ENCODE measurements at regions of chr1 and their contacts with region 1.

Region 1: GRCh38 chr1:28329395-28330153 is 734 bp downstream of the MED18 start:
- DNase-seq: peak; percentile 56 to 78
- ATAC-seq: peak; percentile 26
- H3K4me3 ChIP-seq: peak overlapping the region; percentile 57 to 91
- H3K27ac ChIP-seq: peak overlapping the region in 1 of 2 donors; percentile 32
- H3K4me1 ChIP-seq: peaks cover 0 to 3% of the 10 kb centered on the region in 2 donors
- H3K27me3 ChIP-seq: no peaks in the 10 kb centered on the region

Region 2: GRCh38 chr1:28115267-28115666 is 214.3 kb before region 1 on chr1:
- intact Hi-C with region 1: no loop called
- DNase-seq: peak in 1 of 2 donors; percentile 53
- ATAC-seq: no peak
- H3K4me3 ChIP-seq: no peak overlapping the region
- H3K27ac ChIP-seq: no peak overlapping the region
- H3K4me1 ChIP-seq: no peaks in the 10 kb centered on the region
- H3K27me3 ChIP-seq: no peaks in the 10 kb centered on the region

Region 3: GRCh38 chr1:28248283-28249012 is 81.1 kb before region 1 on chr1:
- intact Hi-C with region 1: loop called in 1 of 2 experiments (anchors 1 kb)
- DNase-seq: peak; percentile 85 to 92
- ATAC-seq: peak; percentile 89
- H3K4me3 ChIP-seq: no peak overlapping the region
- H3K27ac ChIP-seq: peak overlapping the region in 1 of 2 donors; percentile 86
- H3K4me1 ChIP-seq: no peaks in the 10 kb centered on the region
- H3K27me3 ChIP-seq: no peaks in the 10 kb centered on the region

Region 4: DNA sequence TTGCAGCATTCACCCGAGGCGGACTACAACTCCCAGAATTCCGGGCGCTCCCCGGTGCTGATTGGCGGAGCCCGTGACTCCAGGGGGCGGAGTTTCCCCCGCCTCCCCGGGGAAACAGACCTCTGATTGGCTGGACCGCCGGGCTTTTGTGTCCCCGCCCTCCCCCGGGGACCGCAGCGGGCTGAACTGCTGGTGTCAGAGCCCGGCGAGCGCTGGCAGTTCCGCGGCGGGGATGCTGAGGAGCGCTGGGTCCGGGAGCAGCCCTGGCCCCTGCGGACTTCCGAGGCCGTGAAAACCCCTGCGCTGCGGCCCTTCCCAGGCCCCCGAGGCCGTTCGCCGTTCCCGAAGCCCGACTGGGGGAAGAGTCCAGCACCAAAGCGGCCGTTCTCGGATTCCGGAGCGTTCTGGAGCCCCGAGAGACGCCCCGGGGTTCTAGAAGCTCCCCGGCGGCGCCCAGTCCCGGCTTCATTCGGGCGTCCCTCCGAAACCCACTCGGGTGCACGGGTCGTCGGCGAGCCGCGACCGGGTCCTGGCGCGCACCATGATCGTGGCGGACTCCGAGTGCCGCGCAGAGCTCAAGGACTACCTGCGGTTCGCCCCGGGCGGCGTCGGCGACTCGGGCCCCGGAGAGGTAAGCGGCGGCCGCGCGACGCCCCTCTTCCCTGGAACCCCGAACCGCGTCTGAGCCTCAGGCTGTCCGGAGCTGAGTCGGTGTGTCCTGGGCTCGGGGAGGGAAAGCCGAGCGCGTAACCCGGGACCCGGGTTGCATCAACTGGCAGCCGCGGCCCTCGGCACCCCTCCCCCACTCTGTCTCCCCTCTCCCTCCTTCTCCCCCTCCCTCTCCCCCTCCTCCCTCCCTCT is 70.0 kb before region 1 on chr1 and contains the start of gene SESN2:
- intact Hi-C with region 1: loop called (anchors 5 kb)
- DNase-seq: peak; percentile 100
- ATAC-seq: peak; percentile 98
- H3K4me3 ChIP-seq: peak within 1 kb of the TSS; percentile 64 to 96
- H3K27ac ChIP-seq: peak within 1 kb of the TSS; percentile 50 to 65
- H3K4me1 ChIP-seq: no peaks in the 10 kb centered on the region
- H3K27me3 ChIP-seq: no peaks in the 10 kb centered on the region
- total RNA-seq, gene SESN2: 9.8 to 11.1 TPM